Activated CD8-positive, alpha-beta T cell treated with anti-CD3 and anti-CD28 coated beads for 36 hours (primary cell): ENCODE measurements at regions of chrX and their contacts with region 1.

Region 1: GRCh38 chrX:110317820-110318658 is at the start of gene AMMECR1:
- DNase-seq: peak; percentile 84
- ATAC-seq: peak; percentile 85
- H3K4me3 Mint-ChIP-seq: peak within 1 kb of the TSS; percentile 91
- H3K27ac Mint-ChIP-seq: peak within 1 kb of the TSS; percentile 98
- H3K4me1 Mint-ChIP-seq: peaks cover 35% of the 10 kb centered on the region
- H3K27me3 Mint-ChIP-seq: no peaks in the 10 kb centered on the region
- CTCF ChIP-seq: no peak
- total RNA-seq, gene AMMECR1: 7.6 to 8.4 TPM

Region 2: GRCh38 chrX:110167952-110168451 is 150.0 kb before region 1 on chrX:
- CTCF ChIA-PET with region 1: no interaction called
- POLR2A ChIA-PET with region 1: interaction called, 3 read pairs
- intact Hi-C with region 1: loop called (anchors 10 kb)
- DNase-seq: peak; percentile 58
- ATAC-seq: peak; percentile 72
- H3K4me3 Mint-ChIP-seq: no peak overlapping the region
- H3K27ac Mint-ChIP-seq: no peak overlapping the region
- H3K4me1 Mint-ChIP-seq: no peaks in the 10 kb centered on the region
- H3K27me3 Mint-ChIP-seq: no peaks in the 10 kb centered on the region
- CTCF ChIP-seq: peak; percentile 49

Region 3: GRCh38 chrX:110432091-110432905 is 114.3 kb after region 1 on chrX:
- CTCF ChIA-PET with region 1: no interaction called
- POLR2A ChIA-PET with region 1: no interaction called
- intact Hi-C with region 1: no loop called
- DNase-seq: no peak
- ATAC-seq: no peak
- H3K4me3 Mint-ChIP-seq: no peak overlapping the region
- H3K27ac Mint-ChIP-seq: no peak overlapping the region
- H3K4me1 Mint-ChIP-seq: no peaks in the 10 kb centered on the region
- H3K27me3 Mint-ChIP-seq: no peaks in the 10 kb centered on the region
- CTCF ChIP-seq: no peak